PC-9 (cell line): ENCODE measurements at regions of chr17 and their contacts with region 1.

Region 1: GRCh38 chr17:75795820-75796607 is 11.4 kb downstream of the UNK start:
- DNase-seq: no peak
- H3K4me3 ChIP-seq: no peak overlapping the region
- H3K27ac ChIP-seq: no peak overlapping the region
- H3K4me1 ChIP-seq: no peaks in the 10 kb centered on the region
- H3K27me3 ChIP-seq: no peaks in the 10 kb centered on the region
- CTCF ChIP-seq: no peak

Region 2: DNA sequence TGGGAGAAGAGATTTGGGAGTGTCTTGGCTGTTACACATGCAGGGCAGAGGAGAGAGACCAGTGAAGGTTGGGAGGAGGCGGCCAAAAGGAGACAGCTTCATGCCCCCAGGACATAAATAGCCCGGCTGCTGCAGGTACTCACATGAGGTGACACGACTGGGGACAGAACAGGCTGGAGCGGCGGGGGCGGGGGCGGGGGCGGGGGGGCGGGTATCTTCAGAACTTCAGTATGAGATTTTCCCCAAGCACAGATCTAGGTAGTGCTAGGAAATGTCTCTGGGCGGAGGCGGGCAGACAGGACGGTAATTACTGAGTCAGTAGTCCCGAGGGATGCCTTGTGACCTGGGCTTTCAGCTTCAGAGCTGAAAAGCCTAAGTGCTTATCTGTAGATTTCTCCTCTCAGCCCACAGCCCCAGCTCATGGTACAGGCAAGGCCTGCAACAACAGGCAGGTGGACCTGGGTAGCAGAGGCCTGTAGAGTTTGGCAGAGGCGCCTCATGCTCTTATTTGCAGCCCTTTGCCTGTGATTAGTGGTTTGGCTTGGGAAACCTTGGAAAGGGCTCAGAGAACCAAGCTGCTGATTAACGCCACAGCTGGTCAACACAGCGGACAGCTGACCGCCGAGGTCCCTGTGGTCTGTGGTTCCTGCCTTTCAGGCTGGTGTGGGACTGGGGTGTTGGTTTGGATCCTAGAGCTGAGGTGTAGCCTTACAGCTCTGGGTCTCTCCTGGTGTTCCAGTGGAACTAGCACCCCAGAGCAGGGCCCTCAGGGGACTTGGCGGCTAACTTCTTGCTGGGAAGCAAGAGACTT is 13.1 kb after region 1 on chr17:
- CTCF ChIA-PET with region 1: no interaction called
- POLR2A ChIA-PET with region 1: interaction called, 10 read pairs
- intact Hi-C with region 1: no loop called
- DNase-seq: no peak
- H3K4me3 ChIP-seq: no peak overlapping the region
- H3K27ac ChIP-seq: no peak overlapping the region
- H3K4me1 ChIP-seq: no peaks in the 10 kb centered on the region
- H3K27me3 ChIP-seq: no peaks in the 10 kb centered on the region
- CTCF ChIP-seq: no peak

Region 3: DNA sequence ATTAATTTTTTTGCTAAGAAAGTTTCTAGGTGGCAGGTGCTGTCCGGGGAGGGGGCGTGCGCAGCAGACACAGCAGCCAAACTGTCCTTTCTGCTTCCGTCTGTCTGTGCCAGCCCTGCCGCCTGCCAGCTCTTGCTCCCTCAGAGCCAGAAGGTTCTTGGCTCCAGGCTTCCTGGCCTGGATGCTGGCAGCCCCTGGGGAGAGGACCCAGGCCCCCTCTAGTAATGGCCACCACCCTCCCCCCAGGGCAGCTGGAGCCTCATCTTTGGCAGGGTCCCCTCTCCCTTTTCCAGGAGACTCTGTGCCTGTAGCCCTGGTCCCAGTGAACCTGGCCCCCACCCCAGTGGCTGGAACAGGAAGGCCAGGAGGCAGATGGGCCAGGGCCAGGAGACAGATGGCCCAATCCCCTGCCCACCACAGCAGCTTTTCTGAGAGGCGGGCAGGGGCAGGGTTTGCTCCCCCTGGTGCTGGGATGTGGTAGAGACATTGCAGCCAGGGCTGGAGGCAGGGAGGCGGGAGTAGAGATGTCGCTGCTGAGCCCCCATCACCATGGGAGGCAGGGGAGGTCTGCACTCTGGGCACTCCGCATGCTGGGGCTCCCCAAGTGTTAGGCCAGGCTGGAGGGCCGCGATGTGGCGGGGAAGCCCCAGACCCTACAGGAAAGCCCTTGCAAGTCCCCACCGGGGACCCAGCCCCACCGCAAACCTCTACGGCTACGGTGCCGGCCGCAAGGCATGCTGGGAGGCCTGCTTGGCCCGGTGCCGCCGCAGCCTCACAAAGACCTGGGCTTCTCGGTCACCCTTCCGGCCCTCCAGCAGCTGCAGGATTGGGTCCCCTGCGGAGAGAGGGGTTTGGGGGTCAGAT is 31.5 kb after region 1 on chr17:
- CTCF ChIA-PET with region 1: no interaction called
- POLR2A ChIA-PET with region 1: no interaction called
- intact Hi-C with region 1: no loop called
- DNase-seq: no peak
- H3K4me3 ChIP-seq: no peak overlapping the region
- H3K27ac ChIP-seq: peak overlapping the region; percentile 12; the same call in 1 of the 2 replicates
- H3K4me1 ChIP-seq: no peaks in the 10 kb centered on the region
- H3K27me3 ChIP-seq: no peaks in the 10 kb centered on the region
- CTCF ChIP-seq: peak; percentile 64

Region 4: DNA sequence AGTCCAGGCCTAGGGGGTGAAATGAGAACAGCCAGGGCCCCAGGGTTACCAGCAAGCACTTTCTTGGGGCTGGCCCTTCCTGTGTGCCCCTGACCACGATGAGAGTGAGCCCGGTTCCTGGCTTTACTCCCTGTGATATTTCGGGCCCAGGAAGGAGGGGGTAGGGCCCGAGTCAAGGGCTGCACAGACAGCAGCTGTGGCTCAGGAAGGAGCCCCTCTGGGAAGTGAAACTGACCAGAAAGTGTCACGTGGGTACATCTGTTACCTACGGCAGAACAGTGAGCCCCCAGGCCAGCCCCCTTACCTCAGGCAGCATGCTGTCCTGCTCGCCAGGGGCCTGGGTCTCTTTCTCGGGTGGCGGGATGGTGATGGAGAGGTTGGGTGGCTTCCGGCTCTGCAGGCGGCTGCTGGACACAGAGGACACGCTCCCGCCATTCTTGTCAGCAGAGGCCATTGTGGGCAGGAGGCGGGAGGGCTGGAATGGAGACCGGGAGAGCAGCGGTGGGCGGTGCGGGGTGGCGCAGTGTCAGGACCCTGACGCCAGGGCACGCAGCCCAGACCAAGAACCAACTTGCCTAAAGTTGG is 685.1 kb after region 1 on chr17:
- CTCF ChIA-PET with region 1: no interaction called
- POLR2A ChIA-PET with region 1: no interaction called
- intact Hi-C with region 1: no loop called
- DNase-seq: no peak
- H3K4me3 ChIP-seq: no peak overlapping the region
- H3K27ac ChIP-seq: no peak overlapping the region
- H3K4me1 ChIP-seq: no peaks in the 10 kb centered on the region; the same call in 1 of the 2 replicates
- H3K27me3 ChIP-seq: no peaks in the 10 kb centered on the region
- CTCF ChIP-seq: no peak